ENCODE measurements at regions of chr10 and their contacts with region 1.

Region 1: GRCh38 chr10:59808896-59809643 is 55.8 kb upstream of the MRLN start:
- DNase-seq: peak; percentile 83
- H3K4me3 ChIP-seq: no peak overlapping the region
- H3K27ac ChIP-seq: no peak overlapping the region
- H3K4me1 ChIP-seq: peaks cover 27% of the 10 kb centered on the region
- H3K27me3 ChIP-seq: no peaks in the 10 kb centered on the region
- CTCF ChIP-seq: peak; percentile 78

Region 2: GRCh38 chr10:59234816-59235429 is 574.1 kb before region 1 on chr10:
- CTCF ChIA-PET with region 1: no interaction called
- POLR2A ChIA-PET with region 1: no interaction called
- intact Hi-C with region 1: loop called (anchors 2 kb)
- DNase-seq: peak; percentile 70
- H3K4me3 ChIP-seq: no peak overlapping the region
- H3K27ac ChIP-seq: no peak overlapping the region
- H3K4me1 ChIP-seq: peaks cover under 1% of the 10 kb centered on the region
- H3K27me3 ChIP-seq: no peaks in the 10 kb centered on the region
- CTCF ChIP-seq: peak; percentile 88

Region 3: GRCh38 chr10:59865101-59865500 is 56.0 kb after region 1 on chr10:
- CTCF ChIA-PET with region 1: no interaction called
- POLR2A ChIA-PET with region 1: no interaction called
- intact Hi-C with region 1: no loop called
- DNase-seq: peak; percentile 37
- H3K4me3 ChIP-seq: no peak overlapping the region
- H3K27ac ChIP-seq: no peak overlapping the region
- H3K4me1 ChIP-seq: no peaks in the 10 kb centered on the region
- H3K27me3 ChIP-seq: no peaks in the 10 kb centered on the region
- CTCF ChIP-seq: peak; percentile 39; the same call in 1 of the 2 replicates

Region 4: DNA sequence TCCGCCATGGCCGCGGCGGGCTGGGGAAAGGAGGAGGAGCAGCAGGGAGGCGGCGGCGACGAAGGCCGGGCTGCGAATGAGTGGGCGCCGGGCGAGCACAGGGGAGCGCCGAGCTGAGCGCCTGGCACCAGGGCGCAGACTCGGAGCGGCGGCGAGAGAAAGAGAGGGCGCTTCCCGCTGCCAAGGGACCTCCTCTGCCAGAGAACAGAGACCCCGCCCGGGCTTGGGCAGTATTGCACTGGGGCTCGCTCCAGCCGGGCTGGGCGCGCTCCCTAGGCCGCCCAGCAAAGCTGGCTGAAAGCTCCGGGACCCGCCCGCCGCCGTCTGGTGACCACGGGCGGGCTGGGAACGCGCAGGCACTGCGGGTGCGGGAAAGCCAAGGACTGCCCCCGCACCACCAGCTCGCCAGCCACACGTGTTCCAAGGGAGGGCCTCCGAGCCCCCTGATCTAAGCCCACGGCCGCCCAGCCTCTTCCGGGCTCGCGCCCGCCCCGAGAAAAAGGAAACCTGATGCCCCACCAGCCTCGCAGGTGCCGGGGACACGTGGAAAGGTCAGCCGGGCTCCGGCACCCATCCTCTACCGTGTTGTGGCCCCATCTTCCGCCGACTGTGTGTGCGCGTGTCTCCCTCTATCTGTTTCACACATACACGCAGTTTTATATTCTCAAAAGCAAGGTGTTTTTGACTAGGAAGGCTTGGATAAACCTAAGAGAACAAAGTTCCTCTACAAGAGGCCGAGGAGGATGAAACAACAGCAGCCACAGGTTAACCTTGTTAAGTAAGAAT is 97.5 kb after region 1 on chr10 and contains the start of gene CCDC6:
- CTCF ChIA-PET with region 1: interaction called, 3 read pairs
- POLR2A ChIA-PET with region 1: no interaction called
- intact Hi-C with region 1: loop called (anchors 5 kb)
- DNase-seq: peak; percentile 96
- H3K4me3 ChIP-seq: peak within 1 kb of the TSS; percentile 97
- H3K27ac ChIP-seq: peak within 1 kb of the TSS; percentile 85
- H3K4me1 ChIP-seq: peaks cover 17% of the 10 kb centered on the region
- H3K27me3 ChIP-seq: no peaks in the 10 kb centered on the region
- CTCF ChIP-seq: peak; percentile 76
- total RNA-seq, gene CCDC6: 28.1 and 28.8 TPM in 2 replicates

Region 5: DNA sequence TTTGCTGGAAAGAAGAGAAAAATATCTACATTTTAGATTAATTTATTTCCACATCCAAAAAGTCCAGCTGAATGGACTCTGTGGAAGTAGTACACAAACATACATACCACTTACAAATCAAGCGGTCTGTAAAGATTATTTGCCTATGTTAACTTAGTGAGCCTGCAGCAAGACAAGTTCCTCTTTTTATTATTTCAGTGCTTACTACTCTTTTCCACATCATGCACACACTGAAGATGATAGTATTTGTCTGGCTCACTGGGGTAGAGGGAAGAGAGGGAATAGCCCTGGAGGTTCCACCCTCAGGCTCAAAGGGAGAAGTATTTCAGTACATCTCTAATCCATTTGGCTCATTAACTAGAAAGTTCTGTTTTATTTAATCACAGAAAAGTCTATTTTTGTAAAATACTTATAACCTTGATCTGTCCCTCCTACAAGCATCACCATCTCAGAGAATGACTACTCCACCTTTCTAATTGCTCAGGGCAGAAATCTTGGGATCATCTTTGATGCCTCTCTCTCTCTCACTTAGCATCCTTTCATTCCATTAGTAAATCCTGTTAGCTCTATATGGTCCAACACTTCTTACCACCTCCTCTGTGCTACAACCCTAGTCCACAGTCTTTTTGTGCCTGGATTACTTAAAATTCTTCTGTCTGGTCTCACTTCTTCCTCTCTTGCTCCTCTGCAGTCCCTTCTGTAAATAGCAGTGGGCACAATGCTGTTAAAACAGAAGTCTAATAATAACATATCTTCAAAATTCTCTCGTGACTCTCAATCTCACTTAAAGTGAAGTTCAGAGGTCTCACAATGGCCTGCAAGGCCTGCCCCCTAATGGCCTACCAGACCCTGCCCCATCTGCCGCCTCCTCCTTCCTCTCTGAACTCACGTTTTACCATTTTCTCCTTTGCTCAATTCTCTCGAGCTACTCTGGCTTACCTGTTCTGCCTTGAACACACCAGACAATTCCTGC is 161.6 kb after region 1 on chr10:
- CTCF ChIA-PET with region 1: no interaction called
- POLR2A ChIA-PET with region 1: no interaction called
- intact Hi-C with region 1: no loop called
- DNase-seq: no peak
- H3K4me3 ChIP-seq: no peak overlapping the region
- H3K27ac ChIP-seq: no peak overlapping the region
- H3K4me1 ChIP-seq: peaks cover 10% of the 10 kb centered on the region
- H3K27me3 ChIP-seq: no peaks in the 10 kb centered on the region
- CTCF ChIP-seq: no peak

Region 6: DNA sequence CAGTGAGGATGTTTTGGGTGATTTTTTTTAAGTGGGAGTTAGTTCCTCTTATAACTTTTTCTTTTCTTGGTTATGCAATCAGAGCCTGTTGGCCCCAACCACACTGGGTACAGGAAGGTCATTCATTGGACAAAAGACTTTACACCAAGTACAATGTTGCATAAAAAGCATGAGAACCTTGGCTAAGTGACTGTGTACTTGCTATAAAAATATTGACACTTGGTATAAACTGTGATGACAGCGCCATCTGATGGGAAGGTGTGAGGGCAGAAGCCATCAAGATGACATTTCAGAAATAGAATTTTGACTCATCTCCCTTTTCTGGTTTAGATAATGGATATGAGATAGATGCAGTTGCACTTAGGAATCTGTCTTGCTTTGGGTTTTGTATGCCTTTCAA is 223.7 kb after region 1 on chr10:
- CTCF ChIA-PET with region 1: no interaction called
- POLR2A ChIA-PET with region 1: no interaction called
- intact Hi-C with region 1: loop called (anchors 5 kb)
- DNase-seq: peak; percentile 73
- H3K4me3 ChIP-seq: no peak overlapping the region
- H3K27ac ChIP-seq: no peak overlapping the region
- H3K4me1 ChIP-seq: peaks cover 20% of the 10 kb centered on the region
- H3K27me3 ChIP-seq: peaks cover 49% of the 10 kb centered on the region
- CTCF ChIP-seq: peak; percentile 80